Transverse colon (tissue), 4 donors: ENCODE measurements at regions of chr13 and their contacts with region 1.

Region 1: DNA sequence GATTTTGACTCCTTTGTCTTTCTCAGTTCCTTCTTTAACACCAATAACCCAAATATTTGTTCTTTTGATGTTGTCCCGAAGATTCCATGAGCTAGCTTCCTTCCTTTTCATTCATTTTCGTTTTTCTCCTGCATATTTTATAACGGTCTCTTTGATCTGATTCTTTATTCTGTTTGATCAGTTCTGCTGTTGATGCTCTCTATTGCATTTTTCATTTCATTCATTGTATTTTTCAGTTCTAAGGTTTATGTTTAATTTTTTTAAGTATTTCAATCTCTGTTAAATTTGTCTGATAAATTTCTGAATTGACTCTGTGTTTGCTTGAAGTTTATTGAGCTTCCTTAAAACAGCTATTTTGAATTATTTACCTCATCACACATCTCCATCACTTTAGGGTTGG is 68.4 kb upstream of the LRCH1 start:
- DNase-seq: no peak
- H3K4me3 ChIP-seq: no peak overlapping the region
- H3K27ac ChIP-seq: no peak overlapping the region
- H3K4me1 ChIP-seq: no peaks in the 10 kb centered on the region
- H3K27me3 ChIP-seq: no peaks in the 10 kb centered on the region
- CTCF ChIP-seq: no peak
- EP300 ChIP-seq: no peak
- POLR2A ChIP-seq: no peak

Region 2: GRCh38 chr13:45102136-45102507 is 1382.4 kb before region 1 on chr13:
- in situ Hi-C with region 1: no loop called
- intact Hi-C with region 1: loop called (anchors 5 kb)
- DNase-seq: no peak
- H3K4me3 ChIP-seq: no peak overlapping the region
- H3K27ac ChIP-seq: no peak overlapping the region
- H3K4me1 ChIP-seq: no peaks in the 10 kb centered on the region
- H3K27me3 ChIP-seq: no peaks in the 10 kb centered on the region
- CTCF ChIP-seq: no peak
- EP300 ChIP-seq: no peak
- POLR2A ChIP-seq: no peak